ENCODE measurements at regions of chr11 and their contacts with region 1.

Region 1: GRCh38 chr11:108895579-108896480 is 231.0 kb downstream of the DDX10 start:
- DNase-seq: peak; percentile 83
- H3K4me3 ChIP-seq: peak overlapping the region in 1 of 3 experiments; percentile 57
- H3K27ac ChIP-seq: peak overlapping the region; percentile 95
- H3K4me1 ChIP-seq: peaks cover 34% of the 10 kb centered on the region
- H3K27me3 ChIP-seq: no peaks in the 10 kb centered on the region
- CTCF ChIP-seq: no peak
- POLR2A ChIP-seq: no peak

Region 2: DNA sequence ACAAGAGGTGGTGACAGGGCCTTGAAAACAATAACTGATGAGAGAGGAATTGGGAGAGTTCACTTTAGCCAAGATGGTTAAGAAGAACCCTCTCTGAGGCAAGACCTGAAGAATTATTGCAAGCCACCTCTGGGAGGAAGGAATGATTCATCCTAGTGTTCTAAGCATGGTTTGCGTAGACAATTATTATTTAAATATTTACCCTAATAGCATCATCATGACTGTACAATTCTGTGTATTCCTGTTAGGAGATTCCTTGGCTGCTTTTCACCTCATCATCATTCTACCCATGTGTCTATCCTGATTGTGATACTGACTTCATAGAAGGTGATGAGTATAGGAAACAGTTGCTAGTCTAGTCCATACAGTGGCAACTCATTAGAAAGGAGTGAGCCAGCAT is 33.4 kb after region 1 on chr11:
- CTCF ChIA-PET with region 1: no interaction called
- POLR2A ChIA-PET with region 1: no interaction called
- dilution Hi-C with region 1: no loop called
- intact Hi-C with region 1: loop called (anchors 2 kb)
- DNase-seq: peak; percentile 82
- H3K4me3 ChIP-seq: no peak overlapping the region
- H3K27ac ChIP-seq: peak overlapping the region; percentile 85
- H3K4me1 ChIP-seq: peaks cover 24% of the 10 kb centered on the region
- H3K27me3 ChIP-seq: no peaks in the 10 kb centered on the region
- CTCF ChIP-seq: no peak
- POLR2A ChIP-seq: no peak

Region 3: GRCh38 chr11:109000531-109000930 is 104.7 kb after region 1 on chr11:
- CTCF ChIA-PET with region 1: no interaction called
- POLR2A ChIA-PET with region 1: no interaction called
- dilution Hi-C with region 1: no loop called
- intact Hi-C with region 1: no loop called
- DNase-seq: no peak
- H3K4me3 ChIP-seq: no peak overlapping the region
- H3K27ac ChIP-seq: no peak overlapping the region
- H3K4me1 ChIP-seq: no peaks in the 10 kb centered on the region
- H3K27me3 ChIP-seq: peaks cover 0 to 4% of the 10 kb centered on the region in 2 experiments
- CTCF ChIP-seq: no peak
- POLR2A ChIP-seq: no peak